ENCODE measurements at regions of chr19 and their contacts with region 1.

Region 1: GRCh38 chr19:50357178-50358100 is 8.0 kb downstream of the NAPSA start:
- DNase-seq: peak; percentile 70
- H3K4me3 ChIP-seq: peak overlapping the region; percentile 43 to 52
- H3K27ac ChIP-seq: peak overlapping the region in 1 of 2 experiments; percentile 67; a peak in 2 of 4 replicates
- H3K4me1 ChIP-seq: peaks cover 0 to 4% of the 10 kb centered on the region in 2 experiments; a peak in 1 of 4 replicates
- H3K27me3 ChIP-seq: no peaks in the 10 kb centered on the region
- CTCF ChIP-seq: peak; percentile 82
- EP300 ChIP-seq: no peak
- RAD21 ChIP-seq: peak; percentile 78

Region 2: GRCh38 chr19:50461066-50461875 is 103.8 kb after region 1 on chr19:
- CTCF ChIA-PET with region 1: interaction called, 34 read pairs
- POLR2A ChIA-PET with region 1: no interaction called
- DNase-seq: peak; percentile 93
- H3K4me3 ChIP-seq: peak overlapping the region in 1 of 2 experiments; percentile 22; a peak in 1 of 4 replicates
- H3K27ac ChIP-seq: no peak overlapping the region
- H3K4me1 ChIP-seq: peaks cover 0 to 4% of the 10 kb centered on the region in 2 experiments; a peak in 1 of 4 replicates
- H3K27me3 ChIP-seq: peaks cover 5% of the 10 kb centered on the region; the same call in 1 of the 2 replicates
- CTCF ChIP-seq: peak; percentile 81
- EP300 ChIP-seq: no peak
- RAD21 ChIP-seq: peak; percentile 91

Region 3: DNA sequence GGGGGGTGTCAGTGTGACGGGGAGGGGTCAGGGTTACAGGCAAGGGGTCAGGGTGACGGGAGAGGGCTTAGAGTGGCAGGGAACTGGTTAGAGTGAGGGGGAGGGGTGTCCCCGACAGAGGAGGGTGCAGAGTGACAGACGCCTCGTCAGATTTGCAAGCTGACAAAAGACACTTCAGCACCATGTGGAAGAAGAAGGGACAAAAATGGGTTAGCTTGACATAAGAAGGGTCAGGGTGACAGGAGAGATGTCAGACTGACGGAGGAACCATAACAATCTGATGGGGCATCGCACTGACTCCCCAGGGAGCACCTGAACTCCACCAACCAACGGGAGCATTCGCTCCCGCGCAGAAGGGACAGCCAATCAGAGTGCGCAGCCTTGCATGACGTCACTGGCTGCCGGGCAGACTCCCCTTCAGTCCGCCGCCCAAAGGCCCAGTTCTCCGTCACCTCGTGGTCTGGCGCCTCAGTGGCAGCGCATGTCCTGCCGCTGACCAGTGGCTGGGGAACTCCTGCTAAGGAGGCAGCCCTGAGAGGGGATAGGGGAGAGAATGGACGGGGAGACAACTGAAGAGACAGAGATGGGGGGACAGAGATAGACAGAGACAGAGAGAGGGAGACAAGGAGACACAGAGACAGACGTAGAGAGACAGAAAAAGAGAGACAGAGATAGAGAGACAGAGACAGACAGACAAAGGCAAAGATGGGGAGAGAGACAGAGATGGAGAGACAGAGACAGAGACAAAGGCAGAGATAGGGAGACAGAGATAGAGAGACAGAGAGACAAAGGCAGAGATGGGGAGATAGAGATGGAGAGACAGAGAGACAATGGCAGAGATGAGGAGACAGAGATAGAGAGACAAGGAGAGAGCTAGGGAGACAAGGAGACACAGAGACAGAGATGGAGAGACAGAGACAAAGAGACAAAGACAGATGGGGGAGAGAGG is 322.0 kb after region 1 on chr19:
- CTCF ChIA-PET with region 1: no interaction called
- POLR2A ChIA-PET with region 1: no interaction called
- DNase-seq: peak; percentile 95
- H3K4me3 ChIP-seq: no peak overlapping the region
- H3K27ac ChIP-seq: no peak overlapping the region
- H3K4me1 ChIP-seq: no peaks in the 10 kb centered on the region; a peak in 1 of 4 replicates
- H3K27me3 ChIP-seq: no peaks in the 10 kb centered on the region
- CTCF ChIP-seq: no peak
- EP300 ChIP-seq: no peak
- RAD21 ChIP-seq: no peak